PC-9 (cell line): ENCODE measurements at regions of chr4 and their contacts with region 1.

Region 1: DNA sequence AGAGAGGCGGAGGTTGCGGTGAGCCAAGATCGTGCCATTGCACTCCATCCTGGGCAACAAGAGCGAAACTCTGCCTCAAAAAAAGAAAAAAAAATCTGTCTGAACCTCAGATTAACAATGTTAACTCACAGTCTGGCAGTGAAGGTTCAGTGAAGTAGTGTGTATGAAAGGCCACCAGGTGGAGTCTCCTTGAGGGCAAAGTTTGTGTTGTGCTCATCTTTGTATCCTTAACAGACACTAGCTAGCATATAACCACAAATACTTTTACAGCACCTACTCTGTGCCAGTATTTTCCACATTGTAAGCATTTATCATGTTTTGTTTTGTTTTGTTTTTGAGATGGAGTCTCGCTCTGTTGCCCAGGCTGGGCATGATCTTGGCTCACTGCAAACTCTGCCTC is 46.0 kb upstream of the MGST2 start:
- DNase-seq: peak in 1 of 2 experiments; percentile 42
- H3K4me3 ChIP-seq: no peak overlapping the region
- H3K27ac ChIP-seq: no peak overlapping the region
- H3K4me1 ChIP-seq: no peaks in the 10 kb centered on the region
- H3K27me3 ChIP-seq: no peaks in the 10 kb centered on the region
- CTCF ChIP-seq: peak; percentile 69

Region 2: GRCh38 chr4:138367942-138368341 is 1251.7 kb before region 1 on chr4:
- CTCF ChIA-PET with region 1: no interaction called
- POLR2A ChIA-PET with region 1: no interaction called
- intact Hi-C with region 1: no loop called
- DNase-seq: no peak
- H3K4me3 ChIP-seq: no peak overlapping the region
- H3K27ac ChIP-seq: no peak overlapping the region
- H3K4me1 ChIP-seq: no peaks in the 10 kb centered on the region
- H3K27me3 ChIP-seq: no peaks in the 10 kb centered on the region
- CTCF ChIP-seq: no peak

Region 3: DNA sequence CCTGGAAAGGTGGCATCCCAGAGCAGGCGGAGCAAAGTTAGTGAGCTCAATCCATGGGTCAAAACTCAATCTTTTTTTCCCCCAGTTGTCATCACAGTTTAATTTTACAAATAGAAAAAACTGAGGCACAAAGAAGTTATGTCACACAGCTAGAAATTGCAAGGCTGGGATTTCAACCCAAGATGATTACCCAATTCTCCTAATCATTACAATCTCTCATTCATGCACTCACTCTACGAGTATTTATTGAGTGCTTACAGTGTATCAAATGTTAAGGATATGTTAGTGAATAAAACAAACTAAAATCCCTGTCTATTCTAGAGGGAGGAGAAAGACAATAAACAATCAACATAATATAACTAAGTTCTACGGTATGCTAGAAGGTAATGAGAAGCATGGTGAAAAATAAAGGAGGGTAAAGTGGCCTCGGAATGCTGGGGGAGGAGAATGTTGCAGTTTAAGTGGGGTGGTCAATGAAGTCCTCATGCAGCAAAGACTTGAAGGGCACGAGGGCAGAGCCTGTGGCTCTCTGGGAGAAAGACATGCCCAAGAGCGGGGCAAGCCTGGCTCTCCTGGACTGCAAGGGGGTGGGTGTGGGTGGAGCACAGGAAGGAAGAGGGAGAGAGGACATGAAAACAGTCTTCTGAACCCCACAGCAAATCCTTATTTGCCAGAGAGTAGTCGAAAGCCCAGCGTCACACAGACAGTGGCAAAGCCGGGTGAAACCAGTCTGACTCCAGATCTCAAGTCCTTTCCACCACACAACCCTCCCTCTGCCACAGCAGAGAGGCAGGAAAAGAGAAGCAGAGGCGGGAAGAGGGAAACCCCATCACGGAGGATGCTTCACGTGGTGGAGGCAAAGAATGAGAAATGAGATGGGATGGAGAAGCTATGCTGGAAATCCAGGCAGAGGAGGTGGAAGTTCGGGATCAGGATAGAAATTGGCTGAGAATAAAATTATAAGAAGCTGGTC is 117.4 kb before region 1 on chr4:
- CTCF ChIA-PET with region 1: interaction called, 11 read pairs
- POLR2A ChIA-PET with region 1: no interaction called
- intact Hi-C with region 1: no loop called
- DNase-seq: no peak
- H3K4me3 ChIP-seq: no peak overlapping the region
- H3K27ac ChIP-seq: no peak overlapping the region
- H3K4me1 ChIP-seq: no peaks in the 10 kb centered on the region
- H3K27me3 ChIP-seq: no peaks in the 10 kb centered on the region
- CTCF ChIP-seq: no peak

Region 4: DNA sequence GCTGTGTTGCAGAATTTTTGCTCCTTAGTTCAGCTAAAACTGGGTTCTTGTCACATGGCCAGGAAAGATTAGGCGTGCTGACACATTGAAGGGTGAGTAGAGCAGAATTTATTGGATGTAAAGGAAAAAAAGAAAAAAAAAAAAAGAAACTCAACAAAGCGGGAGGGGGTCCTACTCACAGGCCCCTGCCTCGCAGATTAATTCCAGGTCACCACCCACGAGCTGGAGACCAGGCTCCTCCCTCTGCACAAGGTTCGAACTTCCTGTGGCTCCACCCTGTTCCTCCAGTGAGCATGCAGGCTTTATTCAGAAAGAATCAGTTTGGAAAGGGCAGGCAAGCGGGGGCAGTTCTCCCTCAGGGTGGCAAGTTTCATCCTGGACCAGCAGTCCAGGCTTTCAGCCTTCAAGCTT is 63.1 kb after region 1 on chr4:
- CTCF ChIA-PET with region 1: no interaction called
- POLR2A ChIA-PET with region 1: no interaction called
- intact Hi-C with region 1: no loop called
- DNase-seq: no peak
- H3K4me3 ChIP-seq: no peak overlapping the region
- H3K27ac ChIP-seq: no peak overlapping the region
- H3K4me1 ChIP-seq: no peaks in the 10 kb centered on the region
- H3K27me3 ChIP-seq: no peaks in the 10 kb centered on the region
- CTCF ChIP-seq: no peak

Region 5: DNA sequence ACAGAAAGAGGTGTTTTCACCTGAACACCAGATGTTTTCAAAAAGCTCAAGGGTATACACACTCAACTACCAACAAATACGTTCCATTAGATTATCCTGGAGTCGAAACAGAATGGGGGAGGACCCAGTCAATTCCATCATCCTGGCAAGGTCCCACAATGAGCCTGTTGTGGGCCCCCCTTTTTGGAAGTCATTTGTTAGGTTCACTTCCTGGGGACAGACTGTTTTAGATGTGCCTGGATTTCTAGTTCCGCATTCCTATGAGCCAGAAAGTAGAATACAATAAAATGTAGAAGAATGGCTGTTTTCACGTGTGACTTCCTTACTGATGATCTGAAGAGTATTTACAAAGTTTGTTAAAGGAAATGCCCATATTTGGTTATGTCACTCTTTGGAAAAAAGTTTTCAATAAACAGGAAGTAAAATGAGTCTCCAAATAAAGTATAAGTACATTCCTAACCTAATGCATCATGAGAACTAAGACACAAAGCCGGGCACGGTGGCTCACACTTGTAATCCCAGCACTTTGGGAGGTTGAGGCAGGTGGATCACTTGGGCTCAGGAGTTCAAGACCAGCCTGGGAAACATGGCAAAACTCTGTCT is 341.8 kb after region 1 on chr4:
- CTCF ChIA-PET with region 1: interaction called, 10 read pairs
- POLR2A ChIA-PET with region 1: no interaction called
- intact Hi-C with region 1: no loop called
- DNase-seq: no peak
- H3K4me3 ChIP-seq: no peak overlapping the region
- H3K27ac ChIP-seq: no peak overlapping the region
- H3K4me1 ChIP-seq: no peaks in the 10 kb centered on the region
- H3K27me3 ChIP-seq: no peaks in the 10 kb centered on the region
- CTCF ChIP-seq: no peak

Region 6: DNA sequence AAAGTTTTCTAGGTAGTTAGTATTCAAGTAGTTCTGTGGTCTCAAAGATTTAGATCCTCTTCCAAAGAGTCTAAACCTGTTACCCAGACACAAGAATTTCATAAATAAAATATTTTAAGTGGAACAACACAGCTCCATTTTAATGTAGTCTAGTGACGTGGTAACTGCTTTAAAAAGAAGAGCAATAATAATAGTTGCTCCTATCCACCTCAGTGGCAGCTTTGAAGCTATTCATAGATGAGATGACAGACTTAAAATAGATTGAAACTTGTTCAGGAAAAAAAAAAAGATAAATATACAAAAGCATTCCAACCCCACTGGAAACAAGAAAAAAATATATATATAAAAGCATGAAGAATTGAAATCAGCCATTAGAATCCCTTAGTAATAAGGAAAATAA is 768.4 kb after region 1 on chr4:
- CTCF ChIA-PET with region 1: no interaction called
- POLR2A ChIA-PET with region 1: no interaction called
- intact Hi-C with region 1: no loop called
- DNase-seq: no peak
- H3K4me3 ChIP-seq: no peak overlapping the region
- H3K27ac ChIP-seq: no peak overlapping the region
- H3K4me1 ChIP-seq: no peaks in the 10 kb centered on the region
- H3K27me3 ChIP-seq: no peaks in the 10 kb centered on the region
- CTCF ChIP-seq: no peak